Activated B cell treated with CpG ODN at 0.5 μM for 24 hours (primary cell): ENCODE measurements at regions of chr17 and their contacts with region 1.

Region 1: DNA sequence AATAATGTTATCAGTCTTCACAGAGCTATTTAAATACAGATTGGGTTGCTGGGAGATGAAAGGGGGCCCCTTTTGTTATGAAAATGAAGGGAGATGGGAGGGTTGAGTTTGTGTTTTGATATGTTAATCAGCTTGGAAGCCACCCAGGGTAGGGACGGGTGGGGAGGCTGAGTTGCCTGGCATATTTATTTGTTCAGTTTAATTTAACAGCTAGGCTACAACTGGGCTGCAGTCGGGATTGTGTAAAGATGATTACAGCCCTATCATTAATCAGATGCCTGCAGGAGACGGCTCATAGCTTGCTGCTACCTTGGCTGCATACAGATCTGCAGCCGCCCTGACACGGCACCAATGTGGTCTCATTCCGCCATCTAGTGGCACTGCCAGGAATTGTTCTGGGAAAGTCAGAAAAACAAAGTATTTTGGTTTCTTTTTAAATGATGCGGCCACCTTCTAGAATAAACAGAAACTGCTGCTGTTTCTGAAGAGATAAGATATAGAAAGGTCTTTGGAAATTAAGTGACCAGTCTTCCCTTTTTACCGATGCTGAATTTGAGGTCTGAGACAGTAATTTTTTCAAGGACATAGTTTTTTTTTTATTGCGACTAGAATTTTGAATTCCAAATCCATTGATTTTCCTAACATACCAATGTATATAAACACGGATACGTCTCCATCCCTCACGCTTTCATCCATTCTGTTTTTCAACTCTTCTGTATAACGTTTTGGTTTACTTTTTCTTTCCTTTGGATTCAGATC is 458.0 kb upstream of the ASIC2 start:
- DNase-seq: peak; percentile 22
- ATAC-seq: peak; percentile 28
- H3K4me3 Mint-ChIP-seq: no peak overlapping the region
- H3K27ac Mint-ChIP-seq: no peak overlapping the region
- H3K4me1 Mint-ChIP-seq: peaks cover 5% of the 10 kb centered on the region
- H3K27me3 Mint-ChIP-seq: peaks cover 18% of the 10 kb centered on the region
- CTCF ChIP-seq: peak; percentile 93

Region 2: DNA sequence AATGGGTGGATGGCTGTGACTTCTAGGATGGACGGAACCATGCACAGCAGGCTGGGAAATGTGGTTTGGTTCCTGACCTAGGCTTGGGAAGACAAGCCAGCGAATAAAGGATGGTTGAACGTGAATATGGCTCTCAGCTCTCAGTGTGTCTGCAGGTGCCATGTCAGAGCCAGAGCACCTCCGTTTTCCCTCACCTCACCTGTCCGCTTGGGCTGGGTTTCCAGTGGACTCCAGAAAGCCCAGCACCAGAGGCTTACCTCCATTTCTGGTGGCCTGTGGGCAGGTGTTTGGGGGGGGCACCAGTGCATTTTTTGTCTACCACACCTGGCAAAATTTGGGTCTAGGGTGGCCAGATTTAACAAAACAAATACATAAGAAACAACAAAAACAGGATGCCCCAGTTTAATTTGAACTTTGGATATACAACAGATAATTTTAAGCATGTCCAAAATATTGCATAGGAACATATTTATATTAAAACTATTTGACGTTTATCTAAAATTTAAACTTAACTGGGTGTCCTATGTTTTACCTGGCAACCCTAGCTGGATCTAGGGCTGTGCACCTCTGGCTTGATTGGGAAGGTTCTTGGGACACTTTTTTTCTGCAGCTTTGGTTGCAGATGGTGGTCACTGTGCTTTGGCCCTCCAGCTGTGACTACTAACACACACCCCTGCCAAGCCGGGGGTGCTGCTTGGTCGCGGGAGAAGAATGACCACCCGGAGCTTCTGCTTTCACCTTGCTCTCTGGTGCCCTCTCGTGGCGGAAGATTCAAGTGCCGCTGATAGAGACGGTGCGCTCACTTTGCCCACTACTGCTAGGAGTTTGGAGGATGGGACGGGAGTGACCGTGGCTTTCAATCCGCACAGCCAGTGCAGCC is 753.1 kb before region 1 on chr17:
- CTCF ChIA-PET with region 1: no interaction called
- POLR2A ChIA-PET with region 1: no interaction called
- intact Hi-C with region 1: loop called (anchors 5 kb)
- DNase-seq: peak; percentile 59
- ATAC-seq: peak; percentile 54
- H3K4me3 Mint-ChIP-seq: no peak overlapping the region
- H3K27ac Mint-ChIP-seq: no peak overlapping the region
- H3K4me1 Mint-ChIP-seq: peaks cover 5% of the 10 kb centered on the region
- H3K27me3 Mint-ChIP-seq: peaks cover 12% of the 10 kb centered on the region
- CTCF ChIP-seq: peak; percentile 96

Region 3: GRCh38 chr17:34163646-34164045 is 412.5 kb after region 1 on chr17:
- CTCF ChIA-PET with region 1: no interaction called
- POLR2A ChIA-PET with region 1: no interaction called
- intact Hi-C with region 1: no loop called
- DNase-seq: no peak
- ATAC-seq: no peak
- H3K4me3 Mint-ChIP-seq: no peak overlapping the region
- H3K27ac Mint-ChIP-seq: no peak overlapping the region
- H3K4me1 Mint-ChIP-seq: no peaks in the 10 kb centered on the region
- H3K27me3 Mint-ChIP-seq: peaks cover 24% of the 10 kb centered on the region
- CTCF ChIP-seq: no peak